Posterior cingulate gyrus (tissue), 11 donors: ENCODE measurements at regions of chr1 and their contacts with region 1.

Region 1: GRCh38 chr1:51638350-51638749 is 21.5 kb downstream of the OSBPL9 start:
- DNase-seq: no peak

Region 2: GRCh38 chr1:51653127-51653526 is 14.8 kb after region 1 on chr1:
- intact Hi-C with region 1: loop called (anchors 2 kb)
- DNase-seq: no peak